CD8-positive, alpha-beta memory T cell (primary cell): ENCODE measurements at regions of chr5 and their contacts with region 1.

Region 1: GRCh38 chr5:73454351-73455036 is 5.9 kb upstream of the FOXD1 start:
- DNase-seq: peak in 3 of 5 donors; percentile 30 to 58 (median 36)
- H3K4me3 ChIP-seq: no peak overlapping the region
- H3K4me3 Mint-ChIP-seq: peak overlapping the region in 1 of 7 donors; percentile 22
- H3K27ac ChIP-seq: no peak overlapping the region
- H3K27ac Mint-ChIP-seq: peak overlapping the region in 1 of 8 donors; percentile 28
- H3K4me1 ChIP-seq: peaks cover 4% of the 10 kb centered on the region
- H3K4me1 Mint-ChIP-seq: peaks cover 5 to 8% (median 7%) of the 10 kb centered on the region in 3 donors
- H3K27me3 ChIP-seq: peaks cover 56% of the 10 kb centered on the region
- H3K27me3 Mint-ChIP-seq: peaks cover 64 to 80% of the 10 kb centered on the region in 2 donors

Region 2: DNA sequence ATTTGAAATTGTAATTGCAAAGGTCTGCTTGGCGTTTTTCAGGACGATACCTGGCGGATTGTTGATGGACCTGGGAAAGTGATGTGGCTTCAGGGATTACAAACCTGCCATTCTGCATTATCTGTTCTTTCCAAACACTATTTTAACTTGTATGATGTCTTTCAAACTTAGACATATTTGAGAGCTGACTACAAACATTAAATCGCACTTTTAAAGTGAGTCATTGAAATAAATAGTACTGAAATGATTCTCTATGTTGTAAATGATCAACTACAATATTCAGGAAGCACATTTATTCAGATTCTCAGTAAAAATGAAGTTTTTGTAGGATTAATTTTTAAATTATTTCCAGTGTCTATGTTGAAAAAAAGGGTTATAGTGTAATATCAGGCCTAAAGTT is 366.5 kb before region 1 on chr5:
- CTCF ChIA-PET with region 1: interaction called, 11 read pairs
- POLR2A ChIA-PET with region 1: no interaction called
- DNase-seq: no peak
- H3K4me3 ChIP-seq: no peak overlapping the region
- H3K4me3 Mint-ChIP-seq: no peak overlapping the region
- H3K27ac ChIP-seq: no peak overlapping the region
- H3K27ac Mint-ChIP-seq: no peak overlapping the region
- H3K4me1 ChIP-seq: no peaks in the 10 kb centered on the region
- H3K4me1 Mint-ChIP-seq: peaks cover 0 to 13% (median 1%) of the 10 kb centered on the region in 3 donors
- H3K27me3 ChIP-seq: no peaks in the 10 kb centered on the region
- H3K27me3 Mint-ChIP-seq: peaks cover 0 to 2% of the 10 kb centered on the region in 2 donors

Region 3: GRCh38 chr5:73303148-73304079 is 151.1 kb before region 1 on chr5:
- CTCF ChIA-PET with region 1: interaction called, 12 read pairs
- POLR2A ChIA-PET with region 1: no interaction called
- DNase-seq: no peak
- H3K4me3 ChIP-seq: no peak overlapping the region
- H3K4me3 Mint-ChIP-seq: peak overlapping the region in 1 of 7 donors; percentile 30
- H3K27ac ChIP-seq: no peak overlapping the region
- H3K27ac Mint-ChIP-seq: peak overlapping the region in 1 of 8 donors; percentile 40
- H3K4me1 ChIP-seq: no peaks in the 10 kb centered on the region
- H3K4me1 Mint-ChIP-seq: peaks cover 21 to 27% (median 22%) of the 10 kb centered on the region in 3 donors
- H3K27me3 ChIP-seq: peaks cover 72% of the 10 kb centered on the region
- H3K27me3 Mint-ChIP-seq: peaks cover 65 to 92% of the 10 kb centered on the region in 2 donors

Region 4: GRCh38 chr5:73387601-73388305 is 66.7 kb before region 1 on chr5:
- CTCF ChIA-PET with region 1: interaction called, 12 read pairs
- POLR2A ChIA-PET with region 1: no interaction called
- DNase-seq: peak; percentile 24 to 78 (median 76)
- H3K4me3 ChIP-seq: peak overlapping the region; percentile 0
- H3K4me3 Mint-ChIP-seq: peak overlapping the region; percentile 48 to 85 (median 70)
- H3K27ac ChIP-seq: no peak overlapping the region
- H3K27ac Mint-ChIP-seq: peak overlapping the region in 7 of 8 donors; percentile 6 to 48 (median 35)
- H3K4me1 ChIP-seq: peaks cover 33% of the 10 kb centered on the region
- H3K4me1 Mint-ChIP-seq: peaks cover 27 to 50% (median 31%) of the 10 kb centered on the region in 3 donors
- H3K27me3 ChIP-seq: peaks cover 9% of the 10 kb centered on the region
- H3K27me3 Mint-ChIP-seq: peaks cover 12 to 14% of the 10 kb centered on the region in 2 donors